CD14-positive monocyte (primary cell): ENCODE measurements at regions of chr12 and their contacts with region 1.

Region 1: DNA sequence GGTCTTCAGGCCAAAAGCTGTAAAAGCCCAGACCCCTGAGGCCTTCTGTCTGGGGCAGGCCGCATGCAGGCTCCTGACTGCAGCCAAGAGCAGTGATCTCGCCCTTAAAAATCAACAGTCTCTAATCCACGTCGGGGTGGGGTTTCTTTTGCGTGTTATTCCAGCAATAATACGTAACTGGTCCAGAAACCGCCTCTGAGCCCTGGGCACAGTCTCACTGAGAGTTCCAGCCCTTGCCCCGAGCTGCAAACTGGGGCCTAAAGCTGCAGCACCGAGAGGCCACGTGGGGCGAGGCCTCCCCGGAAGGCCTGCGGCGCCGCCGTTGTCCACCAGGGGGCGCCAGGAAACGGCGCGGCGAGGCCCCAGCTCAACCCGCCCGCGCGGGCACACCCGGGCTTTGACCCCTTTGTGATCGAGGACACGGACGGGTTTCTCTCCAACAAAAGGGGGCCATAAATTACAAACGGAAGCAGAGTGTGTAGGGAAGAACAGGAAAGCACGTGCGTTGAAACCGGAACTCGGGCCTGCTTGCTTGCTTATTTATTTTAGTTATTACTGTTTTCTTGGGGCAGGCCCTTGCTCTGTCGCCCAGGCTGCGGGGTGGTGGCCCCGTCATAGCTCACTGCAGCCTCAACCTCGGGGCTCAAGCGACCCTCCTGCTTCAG is 87.2 kb downstream of the NINJ2 start:
- DNase-seq: peak; percentile 69 to 75 (median 73)
- H3K4me3 ChIP-seq: peak overlapping the region in 2 of 3 experiments; percentile 7 to 33
- H3K4me3 Mint-ChIP-seq: peak overlapping the region; percentile 64 to 73
- H3K27ac ChIP-seq: peak overlapping the region in 1 of 2 donors; percentile 37
- H3K27ac Mint-ChIP-seq: peak overlapping the region in 6 of 7 donors; percentile 48 to 92 (median 84)
- H3K4me1 ChIP-seq: peaks cover 23 to 27% of the 10 kb centered on the region in 2 donors
- H3K4me1 Mint-ChIP-seq: peaks cover 28% of the 10 kb centered on the region
- H3K27me3 ChIP-seq: no peaks in the 10 kb centered on the region
- H3K27me3 Mint-ChIP-seq: peaks cover 0 to 6% (median 0%) of the 10 kb centered on the region in 3 donors
- CTCF ChIP-seq: peak; percentile 99

Region 2: DNA sequence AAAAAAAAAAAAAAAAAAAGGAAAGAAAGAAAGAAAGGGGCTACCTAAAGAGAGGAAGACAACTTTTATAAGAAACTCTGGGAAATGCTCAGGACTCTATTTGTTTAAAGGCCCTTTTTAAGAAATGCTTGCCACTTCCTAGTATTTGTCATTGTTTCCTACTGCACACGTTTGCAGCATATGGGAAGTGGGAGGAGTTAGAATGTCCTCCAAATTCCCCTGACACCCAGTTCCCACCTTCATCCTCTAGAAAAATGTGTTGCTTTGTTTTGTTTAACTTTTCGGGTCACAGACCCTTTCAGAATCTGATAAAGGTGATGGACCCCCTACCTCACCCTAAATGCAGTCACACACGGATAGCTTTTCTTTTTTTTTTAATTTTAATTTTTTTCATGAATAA is 46.3 kb after region 1 on chr12:
- intact Hi-C with region 1: loop called in 1 of 2 experiments (anchors 5 kb)
- DNase-seq: peak; percentile 60 to 89 (median 83)
- H3K4me3 ChIP-seq: peak overlapping the region in 1 of 3 experiments; percentile 32
- H3K4me3 Mint-ChIP-seq: no peak overlapping the region
- H3K27ac ChIP-seq: peak overlapping the region; percentile 67 to 81
- H3K27ac Mint-ChIP-seq: peak overlapping the region; percentile 90 to 97 (median 95)
- H3K4me1 ChIP-seq: peaks cover 67 to 73% of the 10 kb centered on the region in 2 donors
- H3K4me1 Mint-ChIP-seq: peaks cover 68% of the 10 kb centered on the region
- H3K27me3 ChIP-seq: no peaks in the 10 kb centered on the region
- H3K27me3 Mint-ChIP-seq: no peaks in the 10 kb centered on the region
- CTCF ChIP-seq: no peak

Region 3: DNA sequence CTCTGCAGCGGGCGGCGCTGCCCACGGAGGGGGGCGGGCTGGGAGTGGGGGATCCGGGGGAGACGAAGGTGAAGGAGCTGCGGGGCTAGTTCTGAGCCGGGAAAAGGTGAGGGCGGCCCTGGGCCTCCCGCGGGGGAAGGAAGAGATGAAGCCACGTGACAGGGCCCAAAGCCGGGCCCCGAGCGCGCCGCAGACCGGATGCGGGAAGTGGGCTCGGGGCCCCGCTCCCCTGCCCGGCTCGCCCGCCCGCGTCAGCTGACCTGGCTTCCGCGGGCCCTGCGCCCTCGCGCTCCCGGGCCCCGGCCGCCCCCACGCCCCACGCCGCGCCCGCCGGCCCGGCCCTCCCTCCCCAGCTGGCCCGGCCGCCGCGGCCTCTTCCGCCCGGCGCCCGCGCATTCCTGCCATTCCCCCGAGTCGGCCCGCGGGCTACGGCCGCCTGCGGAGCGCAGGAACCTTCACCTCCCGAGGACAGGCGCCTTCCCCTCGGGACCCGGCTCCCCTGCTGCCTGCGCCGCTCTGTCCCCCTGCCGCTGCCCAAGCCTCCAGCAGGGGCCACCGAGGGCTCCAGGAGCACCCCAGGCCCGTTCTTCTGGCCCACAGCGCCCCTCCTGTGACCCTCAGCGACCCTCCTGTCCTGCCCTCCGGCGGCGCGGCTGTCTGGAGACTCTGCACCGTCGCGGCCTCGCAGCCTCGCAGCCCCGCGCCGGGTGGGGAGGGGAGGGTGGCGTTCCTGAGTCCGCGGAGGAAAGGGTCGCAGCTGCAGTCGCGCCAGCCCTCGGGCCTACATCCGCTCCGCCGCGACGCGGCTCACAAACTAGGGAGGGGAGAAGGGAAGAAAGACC is 66.8 kb after region 1 on chr12:
- intact Hi-C with region 1: loop called in 1 of 2 experiments (anchors 2 kb)
- DNase-seq: peak; percentile 75 to 78 (median 76)
- H3K4me3 ChIP-seq: peak overlapping the region; percentile 58 to 76 (median 71)
- H3K4me3 Mint-ChIP-seq: peak overlapping the region; percentile 86 to 96
- H3K27ac ChIP-seq: peak overlapping the region; percentile 90 to 93
- H3K27ac Mint-ChIP-seq: peak overlapping the region; percentile 94 to 98 (median 96)
- H3K4me1 ChIP-seq: peaks cover 71 to 76% of the 10 kb centered on the region in 2 donors
- H3K4me1 Mint-ChIP-seq: peaks cover 71% of the 10 kb centered on the region
- H3K27me3 ChIP-seq: no peaks in the 10 kb centered on the region
- H3K27me3 Mint-ChIP-seq: no peaks in the 10 kb centered on the region
- CTCF ChIP-seq: peak; percentile 57

Region 4: DNA sequence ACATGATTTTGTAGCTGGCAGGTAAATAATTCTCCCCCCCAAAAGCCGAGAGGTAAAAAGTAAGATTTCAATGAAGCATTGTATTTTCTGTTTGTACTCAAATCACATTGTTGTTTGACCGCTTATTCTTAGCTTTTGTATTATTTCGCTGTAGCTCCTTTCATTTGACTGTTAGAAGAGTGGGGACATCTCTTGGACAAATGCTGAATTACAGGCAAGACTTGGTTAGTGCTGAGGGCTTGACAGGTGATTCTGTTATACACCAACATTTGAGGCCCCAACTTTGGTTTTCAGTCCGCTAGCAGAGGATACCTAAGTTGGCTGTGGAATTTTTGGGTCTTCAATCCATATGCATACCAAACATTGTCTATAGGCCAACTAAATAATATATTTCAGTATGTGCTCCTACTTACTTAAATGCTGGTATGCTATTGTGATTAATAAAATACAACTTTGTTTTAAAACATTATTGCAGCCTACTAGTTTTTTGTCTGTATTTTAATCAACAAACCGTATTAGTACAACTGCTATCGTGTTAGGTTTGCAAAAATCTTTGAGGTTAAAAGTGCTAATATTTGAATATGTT is 517.2 kb after region 1 on chr12:
- intact Hi-C with region 1: loop called in 1 of 2 experiments (anchors 10 kb)
- DNase-seq: peak; percentile 21 to 43 (median 25)
- H3K4me3 ChIP-seq: no peak overlapping the region
- H3K4me3 Mint-ChIP-seq: no peak overlapping the region
- H3K27ac ChIP-seq: no peak overlapping the region
- H3K27ac Mint-ChIP-seq: no peak overlapping the region
- H3K4me1 ChIP-seq: no peaks in the 10 kb centered on the region
- H3K4me1 Mint-ChIP-seq: peaks cover 3% of the 10 kb centered on the region
- H3K27me3 ChIP-seq: no peaks in the 10 kb centered on the region
- H3K27me3 Mint-ChIP-seq: peaks cover 0 to 2% (median 1%) of the 10 kb centered on the region in 3 donors
- CTCF ChIP-seq: peak; percentile 85